AG04450 (cell line): ENCODE measurements at regions of chr17 and their contacts with region 1.

Region 1: GRCh38 chr17:50289991-50290702 is 15.9 kb downstream of the TMEM92 start:
- DNase-seq: peak; percentile 96
- H3K4me3 ChIP-seq: peak overlapping the region; percentile 55
- H3K27ac ChIP-seq: peak overlapping the region; percentile 97
- H3K27me3 ChIP-seq: no peaks in the 10 kb centered on the region
- CTCF ChIP-seq: no peak

Region 2: DNA sequence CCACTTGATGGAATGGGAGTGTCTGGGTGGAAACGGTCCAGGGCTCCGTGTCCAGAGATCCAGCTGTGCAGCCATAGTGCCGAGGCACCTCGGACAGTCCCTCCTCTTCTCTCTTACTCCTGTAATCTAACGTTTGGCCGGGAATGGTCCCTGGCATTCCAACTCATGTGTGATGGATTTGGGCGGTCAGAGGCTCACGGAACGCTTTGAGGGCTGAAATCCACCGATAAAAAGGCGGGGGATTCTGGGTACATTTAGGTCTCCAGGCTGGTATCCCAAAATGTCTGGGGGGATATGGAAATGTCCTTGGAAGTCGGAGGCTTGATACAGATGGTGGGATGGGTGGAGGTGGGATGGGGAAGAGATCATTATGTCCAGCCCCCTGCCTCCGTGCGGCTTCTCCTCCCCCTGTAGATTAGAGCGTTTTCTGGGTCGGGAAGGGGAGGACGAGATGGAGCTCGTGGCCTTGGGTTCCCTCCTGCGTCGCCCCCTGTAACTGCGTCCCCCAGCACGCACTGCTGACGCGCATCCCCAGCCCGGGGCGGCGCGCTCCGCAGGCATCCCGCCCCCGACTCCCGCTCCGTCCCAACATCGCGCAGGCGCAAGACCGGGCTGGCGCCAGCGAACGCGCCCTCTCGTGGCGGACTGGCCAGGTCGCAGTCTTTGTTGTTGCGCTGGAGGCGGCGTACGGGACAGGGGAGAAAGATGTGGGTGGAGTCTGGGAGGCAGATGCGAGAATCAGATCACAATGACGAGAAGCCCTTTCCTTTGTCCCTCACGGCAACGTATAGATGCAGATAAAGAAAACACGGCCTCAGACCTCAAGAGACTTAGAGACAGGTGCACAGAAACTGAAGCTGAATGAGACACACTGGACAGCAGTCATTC is 128.9 kb before region 1 on chr17:
- CTCF ChIA-PET with region 1: interaction called, 32 read pairs
- POLR2A ChIA-PET with region 1: no interaction called
- DNase-seq: peak; percentile 83
- H3K4me3 ChIP-seq: peak overlapping the region; percentile 73
- H3K27ac ChIP-seq: peak overlapping the region; percentile 57
- H3K27me3 ChIP-seq: no peaks in the 10 kb centered on the region
- CTCF ChIP-seq: peak; percentile 84

Region 3: DNA sequence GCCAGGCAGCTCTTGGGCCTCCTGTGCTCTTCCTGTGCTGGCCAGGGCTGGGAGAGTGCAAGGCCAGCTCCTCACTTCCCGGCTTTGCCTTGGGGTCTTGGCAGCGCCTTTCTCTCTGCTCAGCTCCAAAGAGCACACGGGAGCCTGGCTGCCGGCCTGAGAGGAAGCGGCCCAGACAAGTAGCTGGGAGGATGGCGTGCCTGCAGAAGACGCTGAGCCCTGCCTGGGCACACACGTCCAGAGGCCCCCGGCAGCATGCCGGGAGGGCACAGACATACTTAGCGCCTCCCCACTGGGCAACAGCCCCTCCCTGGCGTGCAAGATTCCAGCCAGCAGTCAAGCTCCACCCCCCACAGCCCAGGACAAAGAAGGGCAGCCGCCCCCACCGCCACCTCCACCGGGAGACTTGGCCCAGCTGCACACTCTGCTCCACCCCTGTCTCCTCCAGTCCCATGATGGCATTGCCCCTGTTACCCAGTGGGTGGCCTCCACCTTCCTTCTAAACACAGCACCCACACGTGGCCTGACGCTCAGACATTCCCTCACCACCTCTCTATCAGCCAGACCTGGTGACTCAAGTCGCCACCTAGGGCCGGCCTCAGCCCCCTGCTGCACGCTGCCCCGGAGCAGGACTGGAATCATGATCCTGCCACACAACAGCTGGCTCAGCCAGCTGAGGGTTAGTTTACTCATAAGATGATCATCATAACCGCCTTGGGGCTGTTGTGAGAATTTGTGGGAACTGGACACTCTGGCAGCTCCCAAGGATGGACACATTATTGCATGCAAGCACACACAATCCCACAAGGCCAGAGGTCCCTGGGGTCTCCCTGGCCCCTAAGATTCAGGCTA is 111.9 kb before region 1 on chr17:
- CTCF ChIA-PET with region 1: interaction called, 3 read pairs
- POLR2A ChIA-PET with region 1: interaction called, 13 read pairs
- DNase-seq: peak; percentile 92
- H3K4me3 ChIP-seq: 0 out of 2 replicates have a peak overlapping the region, but pooled peaks have one; percentile 4
- H3K27ac ChIP-seq: peak overlapping the region; percentile 98
- H3K27me3 ChIP-seq: no peaks in the 10 kb centered on the region
- CTCF ChIP-seq: peak; percentile 59

Region 4: DNA sequence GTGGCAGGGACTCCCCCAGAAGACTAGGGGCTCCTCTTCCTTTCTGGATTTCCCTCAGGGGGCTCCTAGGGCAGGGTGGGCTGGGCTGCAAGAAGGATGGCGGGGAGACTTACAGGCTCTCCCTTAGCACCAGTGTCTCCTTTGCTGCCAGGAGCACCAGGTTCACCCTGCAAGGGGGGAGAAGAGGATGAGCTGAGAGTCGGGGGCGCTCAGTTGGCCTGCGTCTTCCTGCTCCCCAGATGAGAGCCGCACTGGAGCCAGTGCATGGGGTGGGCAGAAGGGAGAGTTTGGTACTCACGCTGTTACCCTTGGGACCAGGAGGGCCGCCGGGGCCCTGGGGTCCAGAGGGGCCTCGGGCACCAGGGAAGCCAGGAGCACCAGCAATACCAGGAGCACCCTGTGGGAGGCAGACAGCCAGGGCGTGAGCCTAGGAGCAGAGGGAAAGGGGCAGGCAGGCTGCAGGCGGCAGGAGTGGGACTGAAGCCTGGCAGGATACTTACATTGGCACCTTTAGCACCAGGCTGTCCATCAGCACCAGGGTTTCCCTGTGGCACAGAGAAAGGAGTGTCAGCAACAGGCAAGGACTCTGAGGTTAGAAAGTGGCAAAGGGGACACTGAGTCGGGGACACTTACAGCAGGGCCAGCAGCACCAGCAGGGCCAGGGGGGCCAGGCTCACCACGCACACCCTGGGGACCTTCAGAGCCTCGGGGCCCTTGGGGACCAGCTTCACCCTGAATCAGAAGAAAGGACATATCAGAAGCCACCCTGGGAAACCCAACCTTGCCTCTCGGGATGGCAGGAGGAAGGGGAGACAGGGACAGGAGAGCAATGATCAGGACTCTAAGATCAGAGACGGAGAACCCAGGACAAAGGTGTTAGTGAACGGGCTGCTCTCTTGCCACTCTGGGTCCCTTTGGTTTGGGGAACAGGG is 94.9 kb before region 1 on chr17:
- CTCF ChIA-PET with region 1: interaction called, 11 read pairs
- POLR2A ChIA-PET with region 1: interaction called, 63 read pairs
- DNase-seq: no peak
- H3K4me3 ChIP-seq: peak overlapping the region; percentile 96
- H3K27ac ChIP-seq: peak overlapping the region; percentile 98
- H3K27me3 ChIP-seq: no peaks in the 10 kb centered on the region
- CTCF ChIP-seq: peak; percentile 57

Region 5: GRCh38 chr17:50213026-50214022 is 76.8 kb before region 1 on chr17:
- CTCF ChIA-PET with region 1: interaction called, 3 read pairs
- POLR2A ChIA-PET with region 1: interaction called, 13 read pairs
- DNase-seq: no peak
- H3K4me3 ChIP-seq: no peak overlapping the region
- H3K27ac ChIP-seq: no peak overlapping the region
- H3K27me3 ChIP-seq: no peaks in the 10 kb centered on the region
- CTCF ChIP-seq: no peak

Region 6: GRCh38 chr17:50630524-50631194 is 340.5 kb after region 1 on chr17:
- CTCF ChIA-PET with region 1: no interaction called
- POLR2A ChIA-PET with region 1: no interaction called
- DNase-seq: no peak
- H3K4me3 ChIP-seq: no peak overlapping the region
- H3K27ac ChIP-seq: no peak overlapping the region
- H3K27me3 ChIP-seq: peaks cover 6% of the 10 kb centered on the region
- CTCF ChIP-seq: peak; percentile 72